Calu3 (cell line): ENCODE measurements at regions of chr1 and their contacts with region 1.

Region 1: GRCh38 chr1:187928288-187928687 is 1099.5 kb downstream of the PLA2G4A start:
- DNase-seq: peak; percentile 63
- H3K4me3 Mint-ChIP-seq: no peak overlapping the region
- H3K27ac Mint-ChIP-seq: no peak overlapping the region
- H3K4me1 Mint-ChIP-seq: peaks cover 13% of the 10 kb centered on the region
- H3K27me3 Mint-ChIP-seq: no peaks in the 10 kb centered on the region
- CTCF ChIP-seq: no peak

Region 2: DNA sequence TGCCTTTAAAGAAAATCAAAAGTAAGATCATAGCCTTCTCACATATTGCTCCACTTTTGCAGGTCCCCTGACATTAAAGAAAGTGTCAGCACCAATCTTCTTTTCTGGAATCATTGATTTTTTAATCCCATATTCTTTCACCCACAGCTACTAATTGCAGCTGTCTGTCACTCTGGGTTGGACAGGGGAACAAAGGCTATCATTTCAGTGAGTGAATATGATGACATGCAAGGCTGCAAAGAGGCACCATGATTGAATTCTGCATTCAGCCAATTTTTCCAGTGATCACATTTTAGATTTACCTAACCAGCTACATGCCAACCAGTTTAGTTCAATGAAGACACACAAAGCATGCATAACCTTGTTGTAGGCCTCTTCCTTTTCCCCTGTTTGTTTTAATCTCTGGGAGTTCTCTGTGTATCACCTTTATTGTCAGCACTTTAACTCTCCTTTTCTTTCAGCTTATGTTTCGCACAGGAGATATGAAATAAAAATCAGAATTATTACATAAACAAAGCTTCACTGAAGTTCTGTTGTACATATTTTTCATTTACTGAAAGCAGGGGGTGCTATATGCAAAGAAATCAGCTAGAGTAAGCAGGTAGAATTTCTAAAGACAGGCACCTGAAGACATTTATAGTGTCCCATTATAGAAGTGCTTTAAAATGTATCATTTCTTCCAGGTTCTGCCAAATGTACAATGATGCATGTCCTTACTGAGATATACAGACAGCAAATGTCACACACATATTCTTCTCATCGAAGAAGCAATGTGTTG is 514.7 kb before region 1 on chr1:
- CTCF ChIA-PET with region 1: no interaction called
- intact Hi-C with region 1: loop called (anchors 5 kb)
- DNase-seq: no peak
- H3K4me3 Mint-ChIP-seq: no peak overlapping the region
- H3K27ac Mint-ChIP-seq: no peak overlapping the region
- H3K4me1 Mint-ChIP-seq: peaks cover 7% of the 10 kb centered on the region
- H3K27me3 Mint-ChIP-seq: no peaks in the 10 kb centered on the region
- CTCF ChIP-seq: peak; percentile 26

Region 3: DNA sequence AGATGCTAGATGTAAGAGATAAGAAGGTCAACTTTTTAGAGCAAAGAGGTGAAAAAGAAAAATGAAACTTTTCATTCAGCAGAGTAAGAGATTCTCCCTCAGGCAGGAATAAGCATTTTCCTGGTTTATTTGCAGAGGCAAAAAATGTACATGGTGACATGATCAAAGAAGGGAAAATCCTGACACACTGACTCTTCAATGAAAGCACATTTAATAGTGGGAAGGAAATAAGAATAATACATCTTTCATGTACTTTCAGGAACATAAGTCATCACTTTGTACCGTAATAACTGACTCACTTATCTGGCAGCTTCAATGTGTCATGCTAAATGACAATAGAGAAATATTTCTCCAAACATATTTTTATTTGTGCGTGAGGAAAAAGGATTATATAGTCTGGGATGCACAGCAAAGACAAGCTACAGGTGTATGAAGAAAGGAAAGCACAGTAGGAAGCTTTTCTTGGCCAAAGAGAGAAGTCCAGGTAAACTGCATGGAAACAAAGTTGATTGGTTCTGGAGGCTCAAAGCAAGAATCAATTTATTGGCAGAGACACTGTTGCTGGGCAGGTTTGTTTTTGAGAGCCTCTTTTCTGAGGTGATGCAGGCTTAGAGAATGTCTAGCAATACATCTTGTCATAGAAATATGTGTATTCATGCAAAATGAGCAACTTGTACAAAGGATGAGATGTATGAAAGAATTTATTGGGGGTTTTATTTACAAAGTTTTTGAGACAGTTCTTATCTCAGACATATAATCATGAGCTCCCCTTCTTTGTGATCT is 309.5 kb after region 1 on chr1:
- CTCF ChIA-PET with region 1: no interaction called
- intact Hi-C with region 1: loop called (anchors 5 kb)
- DNase-seq: peak; percentile 7
- H3K4me3 Mint-ChIP-seq: no peak overlapping the region
- H3K27ac Mint-ChIP-seq: no peak overlapping the region
- H3K4me1 Mint-ChIP-seq: peaks cover 36% of the 10 kb centered on the region
- H3K27me3 Mint-ChIP-seq: no peaks in the 10 kb centered on the region
- CTCF ChIP-seq: no peak

Region 4: GRCh38 chr1:188594542-188595235 is 666.4 kb after region 1 on chr1:
- CTCF ChIA-PET with region 1: interaction called, 5 read pairs
- intact Hi-C with region 1: loop called (anchors 10 kb)
- DNase-seq: no peak
- H3K4me3 Mint-ChIP-seq: no peak overlapping the region
- H3K27ac Mint-ChIP-seq: no peak overlapping the region
- H3K4me1 Mint-ChIP-seq: peaks cover 8% of the 10 kb centered on the region
- H3K27me3 Mint-ChIP-seq: no peaks in the 10 kb centered on the region
- CTCF ChIP-seq: no peak

Region 5: GRCh38 chr1:188937965-188938551 is 1009.8 kb after region 1 on chr1:
- CTCF ChIA-PET with region 1: no interaction called
- intact Hi-C with region 1: loop called (anchors 5 kb)
- DNase-seq: peak; percentile 30
- H3K4me3 Mint-ChIP-seq: no peak overlapping the region
- H3K27ac Mint-ChIP-seq: no peak overlapping the region
- H3K4me1 Mint-ChIP-seq: no peaks in the 10 kb centered on the region
- H3K27me3 Mint-ChIP-seq: no peaks in the 10 kb centered on the region
- CTCF ChIP-seq: peak; percentile 65